CD8-positive, alpha-beta T cell (primary cell): ENCODE measurements at regions of chr14 and their contacts with region 1.

Region 1: GRCh38 chr14:70907176-70907995 is at the start of gene PCNX1:
- DNase-seq: peak; percentile 84 to 95 (median 89)
- ATAC-seq: peak; percentile 80
- H3K4me3 ChIP-seq: peak within 1 kb of the TSS; percentile 87 to 95
- H3K4me3 Mint-ChIP-seq: peak within 1 kb of the TSS; percentile 96
- H3K27ac ChIP-seq: peak within 1 kb of the TSS; percentile 70 to 92
- H3K27ac Mint-ChIP-seq: peak within 1 kb of the TSS; percentile 94
- H3K4me1 ChIP-seq: peaks cover 41% of the 10 kb centered on the region
- H3K4me1 Mint-ChIP-seq: peaks cover 57% of the 10 kb centered on the region
- H3K27me3 ChIP-seq: no peaks in the 10 kb centered on the region
- H3K27me3 Mint-ChIP-seq: no peaks in the 10 kb centered on the region
- CTCF ChIP-seq: peak; percentile 83
- total RNA-seq, gene PCNX1: 54.0 to 63.5 TPM

Region 2: GRCh38 chr14:70655110-70655826 is 252.1 kb before region 1 on chr14:
- CTCF ChIA-PET with region 1: interaction called, 4 read pairs
- POLR2A ChIA-PET with region 1: no interaction called
- intact Hi-C with region 1: loop called in 1 of 2 experiments (anchors 5 kb)
- DNase-seq: peak; percentile 31 to 91 (median 79)
- ATAC-seq: peak; percentile 88
- H3K4me3 ChIP-seq: peak overlapping the region; percentile 32 to 46
- H3K4me3 Mint-ChIP-seq: peak overlapping the region; percentile 86
- H3K27ac ChIP-seq: peak overlapping the region; percentile 76 to 90
- H3K27ac Mint-ChIP-seq: peak overlapping the region; percentile 99
- H3K4me1 ChIP-seq: peaks cover 91% of the 10 kb centered on the region
- H3K4me1 Mint-ChIP-seq: peaks cover 93% of the 10 kb centered on the region
- H3K27me3 ChIP-seq: no peaks in the 10 kb centered on the region
- H3K27me3 Mint-ChIP-seq: no peaks in the 10 kb centered on the region
- CTCF ChIP-seq: no peak

Region 3: GRCh38 chr14:70873627-70874026 is 33.8 kb before region 1 on chr14:
- CTCF ChIA-PET with region 1: interaction called, 16 read pairs
- POLR2A ChIA-PET with region 1: interaction called, 5 read pairs
- intact Hi-C with region 1: loop called in 1 of 2 experiments (anchors 2 kb)
- DNase-seq: peak in 3 of 9 experiments; percentile 41 to 50 (median 43)
- ATAC-seq: no peak
- H3K4me3 ChIP-seq: no peak overlapping the region
- H3K4me3 Mint-ChIP-seq: no peak overlapping the region
- H3K27ac ChIP-seq: no peak overlapping the region
- H3K27ac Mint-ChIP-seq: peak overlapping the region; percentile 9
- H3K4me1 ChIP-seq: peaks cover 17% of the 10 kb centered on the region
- H3K4me1 Mint-ChIP-seq: peaks cover 13% of the 10 kb centered on the region
- H3K27me3 ChIP-seq: no peaks in the 10 kb centered on the region
- H3K27me3 Mint-ChIP-seq: no peaks in the 10 kb centered on the region
- CTCF ChIP-seq: no peak

Region 4: GRCh38 chr14:70919774-70920173 is 12.4 kb after region 1 on chr14:
- CTCF ChIA-PET with region 1: interaction called, 34 read pairs
- POLR2A ChIA-PET with region 1: interaction called, 11 read pairs
- intact Hi-C with region 1: loop called in 1 of 2 experiments (anchors 1 kb)
- DNase-seq: peak in 3 of 9 experiments; percentile 27 to 50 (median 32)
- ATAC-seq: peak; percentile 37
- H3K4me3 ChIP-seq: no peak overlapping the region
- H3K4me3 Mint-ChIP-seq: peak overlapping the region; percentile 59
- H3K27ac ChIP-seq: peak overlapping the region in 1 of 2 experiments; percentile 61
- H3K27ac Mint-ChIP-seq: peak overlapping the region; percentile 89
- H3K4me1 ChIP-seq: peaks cover 86% of the 10 kb centered on the region
- H3K4me1 Mint-ChIP-seq: peaks cover 90% of the 10 kb centered on the region
- H3K27me3 ChIP-seq: no peaks in the 10 kb centered on the region
- H3K27me3 Mint-ChIP-seq: no peaks in the 10 kb centered on the region
- CTCF ChIP-seq: no peak

Region 5: GRCh38 chr14:70947711-70948110 is 40.3 kb after region 1 on chr14:
- CTCF ChIA-PET with region 1: interaction called, 154 read pairs
- POLR2A ChIA-PET with region 1: interaction called, 41 read pairs
- intact Hi-C with region 1: no loop called
- DNase-seq: no peak
- ATAC-seq: no peak
- H3K4me3 ChIP-seq: no peak overlapping the region
- H3K4me3 Mint-ChIP-seq: no peak overlapping the region
- H3K27ac ChIP-seq: no peak overlapping the region
- H3K27ac Mint-ChIP-seq: peak overlapping the region; percentile 20
- H3K4me1 ChIP-seq: peaks cover 2% of the 10 kb centered on the region
- H3K4me1 Mint-ChIP-seq: peaks cover 27% of the 10 kb centered on the region
- H3K27me3 ChIP-seq: no peaks in the 10 kb centered on the region
- H3K27me3 Mint-ChIP-seq: no peaks in the 10 kb centered on the region
- CTCF ChIP-seq: no peak

Region 6: GRCh38 chr14:71011479-71011878 is 104.1 kb after region 1 on chr14:
- CTCF ChIA-PET with region 1: interaction called, 12 read pairs
- POLR2A ChIA-PET with region 1: interaction called, 5 read pairs
- intact Hi-C with region 1: no loop called
- DNase-seq: peak in 2 of 9 experiments; percentile 10 to 31
- ATAC-seq: no peak
- H3K4me3 ChIP-seq: no peak overlapping the region
- H3K4me3 Mint-ChIP-seq: no peak overlapping the region
- H3K27ac ChIP-seq: peak overlapping the region in 1 of 2 experiments; percentile 6
- H3K27ac Mint-ChIP-seq: peak overlapping the region; percentile 58
- H3K4me1 ChIP-seq: peaks cover 18% of the 10 kb centered on the region
- H3K4me1 Mint-ChIP-seq: peaks cover 48% of the 10 kb centered on the region
- H3K27me3 ChIP-seq: no peaks in the 10 kb centered on the region
- H3K27me3 Mint-ChIP-seq: no peaks in the 10 kb centered on the region
- CTCF ChIP-seq: peak; percentile 55

Region 7: GRCh38 chr14:71851271-71851670 is 943.9 kb after region 1 on chr14:
- CTCF ChIA-PET with region 1: no interaction called
- POLR2A ChIA-PET with region 1: no interaction called
- intact Hi-C with region 1: no loop called
- DNase-seq: no peak
- ATAC-seq: no peak
- H3K4me3 ChIP-seq: no peak overlapping the region
- H3K4me3 Mint-ChIP-seq: no peak overlapping the region
- H3K27ac ChIP-seq: no peak overlapping the region
- H3K27ac Mint-ChIP-seq: no peak overlapping the region
- H3K4me1 ChIP-seq: no peaks in the 10 kb centered on the region
- H3K4me1 Mint-ChIP-seq: no peaks in the 10 kb centered on the region
- H3K27me3 ChIP-seq: peaks cover 2 to 7% of the 10 kb centered on the region in 2 experiments
- H3K27me3 Mint-ChIP-seq: peaks cover 31% of the 10 kb centered on the region
- CTCF ChIP-seq: no peak